Activated CD8-positive, alpha-beta memory T cell treated with anti-CD3 and anti-CD28 coated beads, Interleukin-2, amount 10 ng/mL, durations not matched to agents 7 days and 5 days (primary cell): ENCODE measurements at regions of chr17 and their contacts with region 1.

Region 1: DNA sequence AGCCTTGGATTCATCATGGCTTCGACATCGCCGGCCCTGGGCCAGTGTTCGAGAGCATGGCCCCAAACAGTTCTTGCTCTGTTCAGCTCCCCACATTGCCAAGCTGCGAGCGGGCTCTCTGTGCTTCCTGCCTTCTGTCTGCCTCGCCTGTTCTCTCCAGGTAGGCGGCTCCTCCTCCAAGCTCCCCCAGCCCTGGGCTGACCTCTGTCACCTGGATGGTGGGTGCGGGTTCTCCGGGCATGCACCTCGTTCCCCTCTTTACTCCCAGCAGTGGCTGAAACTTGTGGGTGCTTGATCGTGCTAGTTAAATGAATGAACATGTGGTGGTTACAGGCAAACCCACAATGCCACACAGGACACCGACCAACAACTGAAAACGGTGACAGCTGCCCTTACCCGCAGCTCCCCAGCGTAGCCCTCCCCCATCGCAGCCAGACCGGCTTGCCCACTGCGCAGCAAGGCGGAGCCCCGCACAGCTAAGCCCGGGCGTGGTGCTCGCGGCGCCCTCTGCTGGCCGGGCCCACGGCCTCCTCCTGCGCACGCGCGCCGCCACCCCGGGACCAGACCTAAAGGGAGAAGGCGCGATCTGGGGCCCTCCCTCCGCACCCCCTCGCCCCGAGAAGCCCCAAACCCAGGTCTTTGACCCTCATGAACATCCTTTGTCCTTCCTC is 23.0 kb upstream of the EIF1 start:
- DNase-seq: peak; percentile 92
- ATAC-seq: peak; percentile 89
- H3K4me3 Mint-ChIP-seq: peak overlapping the region; percentile 71
- H3K27ac Mint-ChIP-seq: peak overlapping the region; percentile 94
- H3K4me1 Mint-ChIP-seq: peaks cover 45% of the 10 kb centered on the region
- H3K27me3 Mint-ChIP-seq: peaks cover 13% of the 10 kb centered on the region

Region 2: GRCh38 chr17:40909351-40909750 is 756.4 kb before region 1 on chr17:
- CTCF ChIA-PET with region 1: interaction called, 12 read pairs
- DNase-seq: peak; percentile 70
- ATAC-seq: peak; percentile 83
- H3K4me3 Mint-ChIP-seq: no peak overlapping the region
- H3K27ac Mint-ChIP-seq: no peak overlapping the region
- H3K4me1 Mint-ChIP-seq: no peaks in the 10 kb centered on the region
- H3K27me3 Mint-ChIP-seq: peaks cover 49% of the 10 kb centered on the region

Region 3: GRCh38 chr17:41579484-41580243 is 86.0 kb before region 1 on chr17:
- CTCF ChIA-PET with region 1: interaction called, 18 read pairs
- DNase-seq: peak; percentile 85
- ATAC-seq: peak; percentile 95
- H3K4me3 Mint-ChIP-seq: no peak overlapping the region
- H3K27ac Mint-ChIP-seq: no peak overlapping the region
- H3K4me1 Mint-ChIP-seq: no peaks in the 10 kb centered on the region
- H3K27me3 Mint-ChIP-seq: peaks cover 41% of the 10 kb centered on the region

Region 4: DNA sequence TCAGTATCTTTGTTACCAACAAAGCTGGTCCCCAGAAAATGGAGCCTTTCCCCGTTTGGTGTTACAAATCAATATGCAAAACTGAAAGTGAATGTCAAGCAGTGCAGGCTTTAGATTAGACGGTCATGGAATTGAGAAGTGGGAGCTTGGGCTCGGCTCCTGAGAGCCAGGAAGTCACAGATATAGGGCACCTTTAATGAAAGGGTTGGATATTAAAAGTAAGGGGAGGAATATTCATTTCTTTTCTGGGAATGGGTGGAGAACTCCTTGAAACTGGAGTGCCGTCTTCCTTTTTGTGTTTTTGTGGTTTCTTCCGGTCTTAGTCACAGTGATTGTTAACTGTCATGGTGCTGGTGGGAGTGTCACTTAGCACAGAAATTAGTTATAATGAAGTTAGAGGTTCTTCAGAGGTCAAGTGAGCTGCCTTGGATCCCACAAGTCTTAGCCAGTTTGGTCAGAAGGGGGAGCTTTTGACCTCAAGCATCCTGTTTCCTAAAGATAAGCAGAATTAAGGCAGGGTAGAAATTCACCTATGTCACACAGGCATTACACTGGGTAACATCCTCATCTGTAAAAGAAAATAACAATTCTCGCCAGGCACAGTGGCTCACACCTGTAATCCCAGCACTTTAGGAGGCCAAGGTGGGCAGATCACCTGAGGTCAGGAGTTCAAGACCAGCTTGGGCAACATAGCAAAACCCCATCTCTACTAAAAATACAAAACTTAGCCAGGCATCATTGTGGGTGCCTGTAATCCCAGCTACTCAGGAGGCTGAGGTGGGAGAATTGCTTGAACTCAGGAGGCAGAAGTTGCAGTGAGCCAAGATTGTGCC is 13.4 kb after region 1 on chr17:
- CTCF ChIA-PET with region 1: interaction called, 239 read pairs
- DNase-seq: peak; percentile 93
- ATAC-seq: peak; percentile 89
- H3K4me3 Mint-ChIP-seq: peak overlapping the region; percentile 88
- H3K27ac Mint-ChIP-seq: peak overlapping the region; percentile 94
- H3K4me1 Mint-ChIP-seq: peaks cover 65% of the 10 kb centered on the region
- H3K27me3 Mint-ChIP-seq: no peaks in the 10 kb centered on the region

Region 5: GRCh38 chr17:41688699-41689496 is 23.2 kb after region 1 on chr17 and contains the start of gene EIF1:
- CTCF ChIA-PET with region 1: interaction called, 239 read pairs
- DNase-seq: peak; percentile 100
- ATAC-seq: peak; percentile 74
- H3K4me3 Mint-ChIP-seq: peak within 1 kb of the TSS; percentile 94
- H3K27ac Mint-ChIP-seq: peak within 1 kb of the TSS; percentile 99
- H3K4me1 Mint-ChIP-seq: peaks cover 29% of the 10 kb centered on the region
- H3K27me3 Mint-ChIP-seq: no peaks in the 10 kb centered on the region
- total RNA-seq, gene EIF1: 593 to 900 TPM

Region 6: GRCh38 chr17:41734139-41734948 is 68.6 kb after region 1 on chr17 and contains the start of gene HAP1:
- CTCF ChIA-PET with region 1: no interaction called
- DNase-seq: no peak
- ATAC-seq: no peak
- H3K4me3 Mint-ChIP-seq: no peak within 1 kb of the TSS
- H3K27ac Mint-ChIP-seq: no peak within 1 kb of the TSS
- H3K4me1 Mint-ChIP-seq: peaks cover 11% of the 10 kb centered on the region
- H3K27me3 Mint-ChIP-seq: peaks cover 69% of the 10 kb centered on the region
- total RNA-seq, gene HAP1: 0.15 to 0.19 TPM

Region 7: GRCh38 chr17:41824086-41824485 is 158.4 kb after region 1 on chr17:
- CTCF ChIA-PET with region 1: no interaction called
- DNase-seq: no peak
- ATAC-seq: no peak
- H3K4me3 Mint-ChIP-seq: no peak overlapping the region
- H3K27ac Mint-ChIP-seq: no peak overlapping the region
- H3K4me1 Mint-ChIP-seq: no peaks in the 10 kb centered on the region
- H3K27me3 Mint-ChIP-seq: no peaks in the 10 kb centered on the region